GM12878 (cell line): ENCODE measurements at regions of chr1 and their contacts with region 1.

Region 1: GRCh38 chr1:74811436-74812179 is 78.7 kb downstream of the TYW3 start:
- DNase-seq: no peak
- ATAC-seq: peak; percentile 87
- H3K4me3 ChIP-seq: no peak overlapping the region; the same call in 1 of the 2 replicates
- H3K27ac ChIP-seq: peak overlapping the region; percentile 31; the same call in 1 of the 2 replicates
- H3K4me1 ChIP-seq: peaks cover 16% of the 10 kb centered on the region
- H3K27me3 ChIP-seq: no peaks in the 10 kb centered on the region
- CTCF ChIP-seq: no peak
- EP300 ChIP-seq: no peak; a peak in 1 of 4 replicates
- POLR2A ChIP-seq: no peak
- RAD21 ChIP-seq: no peak

Region 2: DNA sequence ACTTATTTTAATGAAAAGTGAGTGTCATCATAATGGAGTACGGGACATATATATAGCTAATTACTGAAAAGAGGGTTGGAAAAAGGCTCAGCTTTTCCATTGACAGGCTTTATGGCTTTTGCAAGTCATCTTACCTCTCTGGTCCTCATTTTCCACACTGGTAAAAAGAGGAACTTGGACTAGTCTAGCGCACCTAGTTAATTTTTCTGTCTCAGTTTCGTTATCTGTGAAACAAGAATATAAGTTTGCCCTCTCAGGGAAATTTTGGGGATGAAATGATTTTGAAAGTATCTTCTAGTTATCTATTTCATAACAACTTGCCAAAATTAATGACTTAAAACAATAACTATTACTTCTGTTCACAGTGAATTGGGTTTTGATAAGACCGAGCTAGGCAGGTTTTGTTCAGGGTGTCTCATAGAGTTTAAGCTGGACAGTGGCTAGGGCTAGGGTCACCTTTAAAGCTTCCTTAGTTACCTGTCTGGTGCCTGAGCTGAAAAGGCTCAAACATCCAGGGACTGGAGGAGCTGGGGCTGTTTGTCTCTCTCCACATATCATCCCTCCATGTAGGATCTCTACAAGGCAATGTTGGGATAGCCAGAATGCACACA is 13.0 kb after region 1 on chr1:
- CTCF ChIA-PET with region 1: interaction called, 3 read pairs
- POLR2A ChIA-PET with region 1: interaction called, 6 read pairs
- RAD21 ChIA-PET with region 1: interaction called, 7 read pairs
- SMC1A ChIA-PET with region 1: interaction called, 11 read pairs
- in situ Hi-C with region 1: no loop called
- intact Hi-C with region 1: no loop called
- DNase-seq: no peak
- ATAC-seq: peak; percentile 94
- H3K4me3 ChIP-seq: no peak overlapping the region
- H3K27ac ChIP-seq: no peak overlapping the region
- H3K4me1 ChIP-seq: no peaks in the 10 kb centered on the region
- H3K27me3 ChIP-seq: peaks cover 0 to 4% of the 10 kb centered on the region in 2 experiments; a peak in 2 of 4 replicates
- CTCF ChIP-seq: no peak
- EP300 ChIP-seq: no peak
- POLR2A ChIP-seq: no peak
- RAD21 ChIP-seq: no peak

Region 3: DNA sequence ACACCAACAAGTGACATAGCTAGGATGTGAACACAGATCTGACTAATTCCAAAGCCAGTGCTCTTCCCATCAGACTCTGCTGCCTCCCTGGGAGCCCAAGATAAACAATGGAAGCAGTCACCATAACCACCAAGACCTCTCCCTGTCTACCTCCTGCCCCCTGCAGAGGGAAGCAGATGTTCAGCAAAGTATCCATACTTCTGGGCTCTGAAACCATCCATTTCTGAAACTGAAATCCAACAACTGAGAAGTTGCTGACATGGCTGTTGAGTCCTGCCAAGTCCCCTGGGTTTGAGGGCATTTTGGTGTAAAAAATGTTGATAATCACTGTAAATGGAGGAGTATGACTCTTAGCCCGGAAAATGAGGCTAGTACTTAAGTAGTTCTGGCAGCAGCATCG is 23.4 kb after region 1 on chr1:
- CTCF ChIA-PET with region 1: no interaction called
- POLR2A ChIA-PET with region 1: no interaction called
- RAD21 ChIA-PET with region 1: no interaction called
- SMC1A ChIA-PET with region 1: no interaction called
- in situ Hi-C with region 1: no loop called
- intact Hi-C with region 1: no loop called
- DNase-seq: no peak
- ATAC-seq: no peak
- H3K4me3 ChIP-seq: no peak overlapping the region
- H3K27ac ChIP-seq: no peak overlapping the region
- H3K4me1 ChIP-seq: no peaks in the 10 kb centered on the region
- H3K27me3 ChIP-seq: no peaks in the 10 kb centered on the region
- CTCF ChIP-seq: no peak
- EP300 ChIP-seq: no peak
- POLR2A ChIP-seq: no peak
- RAD21 ChIP-seq: no peak

Region 4: DNA sequence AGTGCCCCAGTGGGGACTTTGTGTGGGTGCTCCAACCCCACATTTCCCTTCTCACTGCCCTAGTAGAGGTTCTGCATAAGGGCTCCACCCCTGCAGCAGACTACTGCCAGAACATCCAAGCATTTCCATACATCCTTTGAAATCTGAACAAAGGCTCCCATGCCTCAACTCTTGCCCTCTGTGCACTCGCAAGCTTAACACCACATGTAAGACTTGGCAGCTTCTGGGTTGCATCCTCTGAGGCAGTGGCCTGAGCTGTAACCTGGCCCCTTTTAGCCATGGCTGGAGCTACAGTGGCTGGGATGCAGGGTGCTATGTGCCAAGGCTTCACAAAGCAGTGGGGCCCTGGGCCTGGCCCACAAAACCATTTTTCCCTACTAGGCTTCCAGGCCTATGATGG is 50.3 kb after region 1 on chr1:
- CTCF ChIA-PET with region 1: no interaction called
- POLR2A ChIA-PET with region 1: no interaction called
- RAD21 ChIA-PET with region 1: no interaction called
- SMC1A ChIA-PET with region 1: no interaction called
- in situ Hi-C with region 1: no loop called
- intact Hi-C with region 1: no loop called
- DNase-seq: no peak
- ATAC-seq: no peak
- H3K4me3 ChIP-seq: no peak overlapping the region
- H3K27ac ChIP-seq: no peak overlapping the region
- H3K4me1 ChIP-seq: peaks cover 5% of the 10 kb centered on the region; the same call in 1 of the 2 replicates
- H3K27me3 ChIP-seq: no peaks in the 10 kb centered on the region
- CTCF ChIP-seq: no peak
- EP300 ChIP-seq: no peak
- POLR2A ChIP-seq: no peak
- RAD21 ChIP-seq: no peak